RWPE1 (cell line): ENCODE measurements at regions of chr9 and their contacts with region 1.

Region 1: DNA sequence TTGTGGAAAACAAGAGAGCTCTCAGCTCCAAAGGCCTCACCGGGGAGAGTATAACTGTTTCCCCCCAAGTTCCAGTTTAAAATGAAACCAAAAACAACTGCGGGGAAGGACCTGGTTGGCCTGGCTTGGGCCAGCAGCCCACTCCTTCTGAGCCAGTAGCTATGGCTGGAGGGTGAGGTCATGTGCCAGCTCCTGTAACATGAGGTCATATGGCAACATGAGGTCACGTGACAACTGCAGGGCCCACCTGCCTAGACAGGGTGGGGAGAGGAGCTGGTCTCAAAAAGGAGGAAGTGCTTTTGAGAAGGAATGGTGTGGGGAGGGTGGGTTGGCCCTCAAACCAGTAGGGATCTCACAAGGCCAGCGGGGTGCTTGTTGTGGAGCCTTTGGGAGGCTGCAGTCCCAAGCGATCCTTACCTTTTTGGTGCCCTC is 29.3 kb upstream of the CRB2 start:
- DNase-seq: no peak
- H3K27ac ChIP-seq: no peak overlapping the region
- CTCF ChIP-seq: no peak

Region 2: DNA sequence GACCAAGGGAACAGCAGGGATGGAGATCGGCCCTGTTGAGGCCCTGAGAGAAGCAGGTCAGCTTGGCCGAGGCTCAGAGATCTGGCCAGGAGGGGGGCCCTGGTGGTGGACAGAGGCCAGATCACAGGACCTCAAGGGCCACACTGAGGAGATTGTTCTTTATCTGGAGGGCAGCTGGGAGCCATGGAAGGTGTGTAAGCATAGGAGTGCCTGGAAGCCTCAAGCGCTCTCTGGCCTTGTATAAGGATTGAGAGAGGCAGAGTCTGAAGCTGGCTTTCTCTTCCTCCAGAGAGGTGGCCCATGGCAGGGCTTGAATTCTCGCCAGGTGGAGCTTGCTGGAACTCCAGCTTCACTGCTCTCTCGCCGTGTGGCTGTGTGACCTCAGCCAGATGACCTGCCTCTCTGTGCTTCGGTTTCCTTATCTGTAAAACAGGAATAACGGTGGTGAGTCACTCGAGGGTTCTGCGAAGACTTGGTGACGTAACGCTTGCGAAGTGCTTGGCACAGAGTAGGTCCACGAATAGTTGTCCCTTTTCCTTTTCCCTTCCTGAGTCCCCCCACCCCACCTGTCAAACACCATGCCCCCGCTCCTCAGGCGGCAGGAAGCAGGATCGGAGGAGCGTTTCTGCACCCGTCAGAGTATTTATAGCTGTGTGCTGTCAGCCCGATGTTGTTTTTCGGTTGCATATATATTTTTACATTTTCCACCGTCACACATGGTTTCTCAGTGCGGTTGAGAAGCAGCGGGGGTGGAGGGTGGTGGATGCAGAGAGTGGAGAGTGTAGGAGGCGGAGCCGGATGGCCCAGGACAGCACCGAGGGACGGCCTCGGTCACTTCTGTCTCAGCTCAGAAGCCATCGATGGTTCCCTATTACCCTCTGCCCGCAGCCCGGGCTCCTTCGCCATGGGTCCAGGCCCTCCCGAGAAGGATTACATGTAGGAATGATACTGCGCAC is 12.3 kb after region 1 on chr9:
- CTCF ChIA-PET with region 1: interaction called, 4 read pairs
- POLR2A ChIA-PET with region 1: interaction called, 10 read pairs
- DNase-seq: no peak
- H3K27ac ChIP-seq: no peak overlapping the region
- CTCF ChIP-seq: no peak